ENCODE measurements at regions of chr15 and their contacts with region 1.

Region 1: DNA sequence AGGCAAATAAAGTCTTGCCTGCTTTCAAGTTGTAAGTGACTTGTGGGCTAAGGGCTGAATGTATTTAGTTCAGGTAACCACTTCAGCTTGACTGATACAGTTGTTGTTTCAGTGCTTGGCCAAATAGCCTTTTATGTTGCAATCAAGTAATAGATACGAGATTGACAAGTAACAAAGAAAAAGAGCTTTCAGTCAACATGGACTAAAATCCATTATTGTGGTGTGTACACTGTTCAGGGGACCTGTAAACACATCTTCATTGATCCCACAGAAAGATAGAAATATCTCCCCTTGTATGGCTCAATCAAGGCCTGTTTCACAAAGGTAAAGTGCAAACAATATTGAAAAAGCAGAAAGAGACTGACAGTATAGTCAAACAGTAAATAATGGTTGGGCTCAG is 224.8 kb upstream of the TMCO5A start:
- DNase-seq: no peak
- H3K4me3 ChIP-seq: no peak overlapping the region
- H3K27ac ChIP-seq: no peak overlapping the region
- H3K4me1 ChIP-seq: no peaks in the 10 kb centered on the region
- H3K27me3 ChIP-seq: no peaks in the 10 kb centered on the region
- CTCF ChIP-seq: no peak

Region 2: DNA sequence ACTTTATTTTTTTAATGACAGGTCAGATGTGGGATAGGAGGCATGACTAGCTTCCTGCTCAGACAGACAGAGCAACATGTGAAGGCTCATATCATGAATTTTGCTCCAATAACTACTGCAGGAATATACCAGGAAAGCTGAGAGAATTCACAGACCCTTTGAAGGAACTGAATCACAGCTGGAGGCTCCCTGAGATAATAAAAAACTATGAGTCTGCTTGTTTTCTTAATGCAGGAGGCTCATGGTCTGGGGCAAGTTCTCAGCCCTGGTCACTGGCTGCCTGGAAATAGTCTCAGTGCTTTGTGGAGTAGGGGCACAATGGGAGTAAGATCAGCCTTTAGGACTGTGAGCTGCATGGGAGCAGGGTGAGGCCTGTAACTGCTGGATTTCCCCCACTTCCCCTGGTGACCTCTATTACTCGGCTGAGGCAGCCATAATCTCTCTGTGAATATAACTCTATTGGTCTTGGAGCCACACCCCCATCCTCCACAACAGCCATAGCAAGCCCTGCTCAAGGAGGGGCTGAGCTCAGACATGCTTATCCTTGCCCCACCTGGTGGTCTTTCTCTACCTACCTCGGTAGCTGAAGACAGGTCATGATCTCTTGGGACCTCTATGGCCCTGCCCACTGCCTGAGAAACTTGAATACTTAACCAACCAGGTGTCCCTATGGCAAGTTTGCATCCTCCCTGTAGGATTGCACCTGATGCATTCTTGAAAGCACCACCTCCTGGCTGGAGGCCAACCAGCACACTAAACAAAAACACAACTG is 56.8 kb before region 1 on chr15:
- CTCF ChIA-PET with region 1: no interaction called
- POLR2A ChIA-PET with region 1: no interaction called
- intact Hi-C with region 1: loop called (anchors 10 kb)
- DNase-seq: no peak
- H3K4me3 ChIP-seq: no peak overlapping the region
- H3K27ac ChIP-seq: no peak overlapping the region
- H3K4me1 ChIP-seq: no peaks in the 10 kb centered on the region
- H3K27me3 ChIP-seq: no peaks in the 10 kb centered on the region
- CTCF ChIP-seq: no peak

Region 3: DNA sequence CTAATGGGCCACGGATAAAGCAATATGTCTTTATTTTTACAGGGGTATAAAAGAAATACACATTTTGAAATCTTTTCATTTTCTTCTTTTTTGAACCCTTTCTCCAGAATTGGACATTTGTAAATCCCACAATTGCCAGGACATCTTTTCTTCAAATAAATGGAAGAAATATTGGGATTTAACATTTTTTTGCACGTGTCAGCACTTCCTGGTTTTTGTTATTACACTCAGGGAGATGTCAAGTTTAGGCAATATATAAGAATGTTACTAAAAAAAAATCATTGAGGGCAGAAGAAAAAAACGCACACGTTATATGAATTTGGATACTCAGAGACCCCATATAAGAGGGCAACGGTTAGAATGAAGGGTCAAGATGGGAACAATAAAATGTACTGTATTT is 146.4 kb after region 1 on chr15:
- CTCF ChIA-PET with region 1: no interaction called
- POLR2A ChIA-PET with region 1: no interaction called
- intact Hi-C with region 1: no loop called
- DNase-seq: no peak
- H3K4me3 ChIP-seq: no peak overlapping the region
- H3K27ac ChIP-seq: no peak overlapping the region
- H3K4me1 ChIP-seq: no peaks in the 10 kb centered on the region
- H3K27me3 ChIP-seq: no peaks in the 10 kb centered on the region
- CTCF ChIP-seq: no peak

Measured in A673 (cell line).